ENCODE measurements at regions of chr3 and their contacts with region 1.

Region 1: DNA sequence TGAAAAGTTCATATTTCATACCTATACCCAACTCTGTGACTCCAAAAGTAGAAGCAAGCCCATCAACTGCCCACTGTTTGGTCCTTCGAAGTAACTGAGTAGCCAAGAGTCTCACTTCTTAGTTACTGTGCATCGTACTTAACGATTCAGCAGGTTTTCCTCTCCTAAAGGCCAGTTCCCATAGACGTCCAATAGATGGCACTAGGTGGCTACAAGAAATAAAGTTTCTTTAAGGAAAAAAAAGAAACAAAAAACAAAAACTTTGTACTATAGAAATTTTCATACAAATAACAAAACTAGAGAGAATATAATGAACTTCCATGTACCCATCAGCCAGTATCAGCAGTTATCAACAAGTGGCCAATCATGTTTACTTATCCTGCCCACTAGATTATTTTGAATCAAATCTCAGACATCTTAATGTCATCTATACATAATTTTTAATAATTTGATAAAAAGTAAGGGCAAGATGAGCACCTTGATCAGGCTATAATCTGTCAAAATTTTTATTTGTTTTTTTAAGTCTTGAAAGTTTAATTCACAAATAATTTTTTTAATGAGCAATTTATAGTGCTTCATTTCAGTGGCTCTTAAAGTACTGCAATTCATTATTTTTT is 63.8 kb upstream of the ACP3 start:
- H3K4me3 Mint-ChIP-seq: no peak overlapping the region
- H3K27ac Mint-ChIP-seq: no peak overlapping the region
- H3K4me1 Mint-ChIP-seq: peaks cover 7% of the 10 kb centered on the region
- H3K27me3 Mint-ChIP-seq: no peaks in the 10 kb centered on the region

Region 2: GRCh38 chr3:132160198-132160597 is 93.2 kb before region 1 on chr3:
- intact Hi-C with region 1: no loop called
- H3K4me3 Mint-ChIP-seq: no peak overlapping the region
- H3K27ac Mint-ChIP-seq: no peak overlapping the region
- H3K4me1 Mint-ChIP-seq: no peaks in the 10 kb centered on the region
- H3K27me3 Mint-ChIP-seq: peaks cover 3% of the 10 kb centered on the region

Region 3: DNA sequence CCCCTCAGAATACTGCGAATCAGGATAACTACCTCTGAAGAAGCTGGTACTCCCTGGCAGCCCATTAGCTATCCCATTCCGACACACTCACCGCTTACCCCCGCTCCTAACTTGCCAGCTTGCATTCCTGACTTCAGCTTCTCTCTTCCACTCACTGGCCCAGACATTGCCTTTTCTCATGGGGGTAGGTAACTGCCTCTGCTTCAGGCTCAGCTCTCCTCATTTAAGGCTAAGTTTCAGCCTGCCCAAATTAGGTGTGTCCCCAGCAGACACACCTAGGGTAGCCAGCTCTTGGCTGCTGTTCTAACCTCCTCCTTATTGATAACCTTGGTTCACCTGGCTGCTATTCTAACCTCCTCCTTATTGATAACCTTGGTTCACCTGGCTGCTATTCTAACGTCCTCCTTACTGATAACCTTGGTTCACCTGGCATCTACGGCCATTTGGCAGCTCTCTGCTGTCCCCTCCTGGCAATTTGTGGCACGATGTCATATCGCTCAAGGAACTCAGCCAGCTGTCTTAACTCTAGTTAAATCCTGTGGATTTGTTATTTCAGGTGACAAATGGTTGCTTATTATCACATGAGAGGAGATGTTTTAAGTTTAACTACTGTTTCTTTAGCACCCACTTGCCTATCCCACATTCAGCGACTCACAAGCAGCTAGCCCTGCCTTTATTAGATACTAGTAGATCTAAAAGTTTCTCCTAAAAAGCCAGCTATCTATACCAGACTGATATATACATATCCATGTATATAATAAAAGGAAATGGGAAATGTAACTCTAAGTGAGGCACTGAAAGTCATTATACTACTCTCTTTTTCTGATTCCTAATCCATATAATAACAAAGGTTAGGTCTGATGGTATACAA is 42.7 kb before region 1 on chr3:
- intact Hi-C with region 1: no loop called
- H3K4me3 Mint-ChIP-seq: no peak overlapping the region
- H3K27ac Mint-ChIP-seq: no peak overlapping the region
- H3K4me1 Mint-ChIP-seq: peaks cover 6% of the 10 kb centered on the region
- H3K27me3 Mint-ChIP-seq: no peaks in the 10 kb centered on the region

Region 4: GRCh38 chr3:132343018-132343612 is 89.7 kb after region 1 on chr3:
- intact Hi-C with region 1: loop called (anchors 1 kb)
- H3K4me3 Mint-ChIP-seq: peak overlapping the region; percentile 60
- H3K27ac Mint-ChIP-seq: peak overlapping the region; percentile 71
- H3K4me1 Mint-ChIP-seq: peaks cover 20% of the 10 kb centered on the region
- H3K27me3 Mint-ChIP-seq: no peaks in the 10 kb centered on the region